A549 (cell line): ENCODE measurements at regions of chr1 and their contacts with region 1.

Region 1: GRCh38 chr1:161165742-161166668 is at the start of gene PPOX:
- DNase-seq: peak; percentile 97 to 99
- ATAC-seq: peak; percentile 95 to 97
- H3K4me3 ChIP-seq: peak within 1 kb of the TSS; percentile 62
- H3K27ac ChIP-seq: peak within 1 kb of the TSS; percentile 77 to 92
- H3K4me1 ChIP-seq: peaks cover 16% of the 10 kb centered on the region
- CTCF ChIP-seq: peak; percentile 66
- EP300 ChIP-seq: no peak
- POLR2A ChIP-seq: peak; percentile 70
- RAD21 ChIP-seq: no peak
- polyA plus RNA-seq, gene PPOX: 13.8 and 16.4 TPM in 2 replicates

Region 2: DNA sequence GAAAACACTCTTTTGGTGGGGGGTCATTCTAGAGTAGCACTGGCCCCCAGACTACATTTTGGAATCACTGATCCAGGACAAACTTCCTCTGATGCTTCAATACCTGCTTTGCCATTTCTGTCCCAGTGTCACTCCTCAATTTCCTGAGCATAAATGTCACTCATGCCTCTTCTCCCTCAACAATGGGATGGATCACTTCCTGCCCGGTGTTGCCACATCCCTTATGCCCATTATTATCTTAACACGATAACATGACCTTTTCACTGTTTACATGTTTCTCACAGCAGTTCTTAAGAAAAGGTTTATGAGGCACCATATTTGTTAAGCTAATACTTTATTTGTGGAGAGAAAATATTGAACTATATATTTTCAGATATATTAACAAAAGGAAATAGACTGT is 277.1 kb before region 1 on chr1:
- CTCF ChIA-PET with region 1: no interaction called
- POLR2A ChIA-PET with region 1: no interaction called
- DNase-seq: peak in 1 of 2 experiments; percentile 18
- ATAC-seq: no peak
- H3K4me3 ChIP-seq: no peak overlapping the region
- H3K27ac ChIP-seq: no peak overlapping the region
- H3K4me1 ChIP-seq: no peaks in the 10 kb centered on the region
- CTCF ChIP-seq: no peak
- EP300 ChIP-seq: no peak
- POLR2A ChIP-seq: no peak
- RAD21 ChIP-seq: no peak

Region 3: GRCh38 chr1:161132410-161133219 is 33.4 kb before region 1 on chr1 and contains the start of gene DEDD:
- CTCF ChIA-PET with region 1: interaction called, 12 read pairs
- POLR2A ChIA-PET with region 1: interaction called, 3 read pairs
- DNase-seq: peak; percentile 94 to 99
- ATAC-seq: peak; percentile 93 to 95
- H3K4me3 ChIP-seq: peak within 1 kb of the TSS; percentile 67
- H3K27ac ChIP-seq: peak within 1 kb of the TSS; percentile 93 to 95
- H3K4me1 ChIP-seq: peaks cover 20% of the 10 kb centered on the region
- CTCF ChIP-seq: no peak
- EP300 ChIP-seq: no peak
- POLR2A ChIP-seq: peak; percentile 35
- RAD21 ChIP-seq: no peak; a peak in 1 of 5 replicates
- polyA plus RNA-seq, gene DEDD: 35.9 and 38.4 TPM in 2 replicates

Region 4: DNA sequence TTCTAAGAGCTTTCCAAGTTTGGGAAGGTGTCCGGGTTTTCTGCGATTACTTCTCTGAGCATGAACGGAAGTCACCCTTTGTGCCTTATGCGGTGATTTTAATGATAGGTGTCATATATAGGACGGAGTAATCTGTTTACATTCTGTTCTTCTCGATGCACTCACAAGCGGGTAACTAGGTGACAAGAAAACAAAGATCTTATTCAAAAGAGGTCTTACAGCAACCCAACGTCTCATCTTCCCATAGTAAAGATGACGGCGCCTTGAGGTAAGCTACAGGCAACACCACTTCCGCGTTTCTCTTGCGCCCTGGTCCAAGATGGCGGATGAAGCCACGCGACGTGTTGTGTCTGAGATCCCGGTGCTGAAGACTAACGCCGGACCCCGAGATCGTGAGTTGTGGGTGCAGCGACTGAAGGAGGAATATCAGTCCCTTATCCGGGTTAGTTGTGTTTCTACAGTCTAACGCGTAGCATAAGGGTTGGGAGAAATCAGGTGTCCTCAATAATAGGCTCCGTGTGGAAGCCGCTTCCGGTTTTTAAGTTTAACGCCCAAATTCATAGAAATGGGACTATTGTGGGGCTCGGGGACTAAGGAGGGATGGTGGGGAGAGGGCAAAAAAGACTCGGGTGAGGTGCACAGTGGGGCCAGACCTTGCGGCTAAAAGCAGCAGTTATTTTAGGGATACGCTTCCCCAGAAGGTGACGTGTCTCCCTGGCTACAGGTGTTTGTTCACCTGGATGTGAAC is 12.2 kb before region 1 on chr1 and contains the start of gene UFC1:
- CTCF ChIA-PET with region 1: interaction called, 59 read pairs
- POLR2A ChIA-PET with region 1: interaction called, 13 read pairs
- DNase-seq: peak; percentile 89 to 94
- ATAC-seq: peak; percentile 93 to 96
- H3K4me3 ChIP-seq: peak within 1 kb of the TSS; percentile 57
- H3K27ac ChIP-seq: peak within 1 kb of the TSS; percentile 89 to 95
- H3K4me1 ChIP-seq: peaks cover 10% of the 10 kb centered on the region
- CTCF ChIP-seq: no peak
- EP300 ChIP-seq: no peak
- POLR2A ChIP-seq: peak; percentile 63; the same call in 1 of the 2 replicates
- RAD21 ChIP-seq: no peak
- polyA plus RNA-seq, gene UFC1: 110 and 115 TPM in 2 replicates

Region 5: DNA sequence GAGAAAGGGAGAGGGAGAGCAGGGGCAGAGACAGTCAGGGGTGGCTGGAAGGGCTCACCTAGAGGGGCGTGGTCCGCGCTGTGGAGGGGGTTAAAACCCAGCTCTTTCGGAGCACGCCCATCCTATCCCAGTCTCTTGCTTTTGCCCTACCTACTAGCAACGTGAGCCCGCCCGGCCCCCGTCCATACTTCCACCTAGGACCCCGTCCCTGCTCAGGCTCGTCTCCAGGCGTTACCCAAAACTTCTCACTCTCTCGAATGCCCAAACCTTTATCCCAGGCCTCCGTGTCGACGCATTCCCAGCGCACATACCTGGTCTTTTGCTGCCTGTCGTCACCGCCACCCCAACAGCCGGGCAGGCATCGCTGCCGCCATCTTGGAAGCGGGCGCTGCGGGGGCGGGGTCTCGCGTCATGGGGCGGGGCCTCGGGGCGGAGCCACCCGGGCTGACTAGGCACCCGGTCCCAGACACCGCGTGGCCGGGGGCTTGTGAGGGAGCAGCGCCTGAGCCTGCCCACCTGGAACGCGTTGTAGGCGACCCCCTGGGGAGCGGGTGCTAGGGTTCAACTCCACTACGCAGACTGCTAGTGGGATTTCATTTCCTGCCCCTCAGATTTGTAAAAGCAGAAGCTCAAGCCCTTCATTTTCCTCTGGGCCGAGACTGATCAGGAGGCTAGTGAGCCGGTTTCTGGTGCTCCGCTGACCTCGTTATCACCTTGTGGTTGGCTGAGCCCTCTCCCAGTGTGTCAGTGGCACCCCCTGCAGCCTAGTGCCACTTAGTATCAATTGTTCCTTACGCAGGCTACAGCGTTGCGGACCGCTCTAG is 11.3 kb after region 1 on chr1 and contains the start of gene B4GALT3:
- CTCF ChIA-PET with region 1: interaction called, 16 read pairs
- POLR2A ChIA-PET with region 1: interaction called, 25 read pairs
- DNase-seq: peak; percentile 81 to 93
- ATAC-seq: peak; percentile 91 to 96
- H3K4me3 ChIP-seq: peak within 1 kb of the TSS; percentile 63
- H3K27ac ChIP-seq: peak within 1 kb of the TSS; percentile 83 to 91
- H3K4me1 ChIP-seq: peaks cover 16% of the 10 kb centered on the region
- CTCF ChIP-seq: no peak
- EP300 ChIP-seq: no peak
- POLR2A ChIP-seq: peak; percentile 98
- RAD21 ChIP-seq: no peak
- polyA plus RNA-seq, gene B4GALT3: 25.3 and 31.4 TPM in 2 replicates

Region 6: GRCh38 chr1:161185282-161185682 is 19.3 kb after region 1 on chr1:
- CTCF ChIA-PET with region 1: interaction called, 38 read pairs
- POLR2A ChIA-PET with region 1: interaction called, 3 read pairs
- DNase-seq: no peak
- ATAC-seq: no peak
- H3K4me3 ChIP-seq: no peak overlapping the region
- H3K27ac ChIP-seq: no peak overlapping the region
- H3K4me1 ChIP-seq: peaks cover 12% of the 10 kb centered on the region
- CTCF ChIP-seq: no peak
- EP300 ChIP-seq: no peak
- POLR2A ChIP-seq: no peak
- RAD21 ChIP-seq: no peak

Region 7: GRCh38 chr1:161192476-161193465 is 26.8 kb after region 1 on chr1:
- CTCF ChIA-PET with region 1: interaction called, 38 read pairs
- POLR2A ChIA-PET with region 1: no interaction called
- DNase-seq: peak; percentile 72 to 84
- ATAC-seq: peak; percentile 88 to 93
- H3K4me3 ChIP-seq: no peak overlapping the region
- H3K27ac ChIP-seq: no peak overlapping the region
- H3K4me1 ChIP-seq: no peaks in the 10 kb centered on the region
- CTCF ChIP-seq: peak; percentile 81
- EP300 ChIP-seq: no peak
- POLR2A ChIP-seq: no peak
- RAD21 ChIP-seq: peak; percentile 62 to 73

Region 8: GRCh38 chr1:161201828-161202725 is 36.1 kb after region 1 on chr1 and contains the start of gene NDUFS2:
- CTCF ChIA-PET with region 1: interaction called, 7 read pairs
- POLR2A ChIA-PET with region 1: interaction called, 15 read pairs
- DNase-seq: peak; percentile 94 to 99
- ATAC-seq: peak; percentile 95 to 98
- H3K4me3 ChIP-seq: peak within 1 kb of the TSS; percentile 84
- H3K27ac ChIP-seq: peak within 1 kb of the TSS; percentile 93
- H3K4me1 ChIP-seq: peaks cover 29% of the 10 kb centered on the region
- CTCF ChIP-seq: peak; percentile 34
- EP300 ChIP-seq: no peak
- POLR2A ChIP-seq: peak; percentile 84
- RAD21 ChIP-seq: no peak
- polyA plus RNA-seq, gene NDUFS2: 125 and 144 TPM in 2 replicates